ENCODE measurements at regions of chr15 and their contacts with region 1.

Region 1: DNA sequence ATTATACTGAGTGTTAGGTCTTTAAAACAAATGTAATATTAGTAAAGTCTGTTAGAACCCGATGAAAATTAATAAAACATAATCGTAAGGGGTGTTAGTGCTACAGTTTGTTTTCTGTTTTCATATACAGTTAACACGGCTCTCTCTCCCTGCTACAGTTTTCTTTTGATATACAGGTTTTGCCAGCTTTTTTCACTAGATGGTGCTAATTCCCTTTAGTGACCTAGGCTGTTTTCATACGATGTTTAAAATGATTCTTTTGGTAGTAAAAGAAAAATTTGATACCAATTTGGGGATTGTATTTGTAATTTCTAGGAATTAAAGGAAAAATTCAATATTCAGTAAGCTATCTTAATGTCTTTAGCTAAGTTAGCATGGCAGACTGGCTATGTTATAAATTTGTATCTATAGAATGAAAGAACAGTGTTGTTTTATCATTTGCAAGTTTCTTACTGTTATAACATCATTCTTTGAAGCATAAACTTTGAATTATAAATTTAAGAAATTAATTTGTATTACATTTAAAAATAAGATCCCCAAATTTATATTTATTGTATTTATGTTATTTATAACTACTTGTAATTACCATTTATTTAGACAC is 11.5 kb downstream of the APH1B start:
- DNase-seq: peak; percentile 50
- CTCF ChIP-seq: peak; percentile 17

Region 2: DNA sequence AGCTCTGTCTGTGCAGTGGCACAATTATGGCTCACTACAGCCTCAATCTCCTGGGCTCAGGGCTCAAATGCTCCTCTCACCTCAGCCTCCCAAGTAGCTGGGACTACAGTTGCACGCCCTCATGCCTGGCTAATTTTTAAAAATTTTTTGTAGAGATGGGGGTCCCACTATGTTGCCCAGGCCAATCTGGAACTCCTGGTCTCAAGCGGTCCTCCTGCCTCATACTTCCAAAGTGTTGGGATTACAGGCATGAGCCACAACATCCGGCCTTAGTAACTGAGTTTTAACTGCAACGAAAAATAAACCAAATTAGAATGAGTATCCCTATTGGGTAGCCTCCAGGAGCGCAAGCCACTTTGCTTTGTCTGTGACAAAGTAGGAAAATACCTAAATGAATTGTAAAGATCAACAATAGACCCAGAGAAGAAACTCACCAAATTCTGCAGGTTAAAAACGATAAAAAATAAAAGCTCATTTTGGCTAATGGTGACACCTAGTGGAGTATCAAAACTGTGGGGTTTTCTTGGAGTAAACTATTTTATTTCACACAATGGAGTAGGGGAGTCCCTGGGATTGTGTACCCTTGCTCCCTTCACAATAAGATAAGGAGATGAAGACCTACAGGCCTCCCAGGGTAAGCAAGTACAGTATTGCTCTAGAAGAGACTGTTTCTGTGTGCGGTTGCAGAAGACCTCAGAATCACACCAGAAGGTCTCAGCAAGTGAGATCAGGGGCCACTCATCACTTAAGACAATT is 113.8 kb after region 1 on chr15:
- in situ Hi-C with region 1: loop called (anchors 10 kb)
- DNase-seq: no peak
- CTCF ChIP-seq: peak; percentile 40

Measured in GM13976 (cell line).